CD8-positive, alpha-beta memory T cell (primary cell): ENCODE measurements at regions of chr14 and their contacts with region 1.

Region 1: DNA sequence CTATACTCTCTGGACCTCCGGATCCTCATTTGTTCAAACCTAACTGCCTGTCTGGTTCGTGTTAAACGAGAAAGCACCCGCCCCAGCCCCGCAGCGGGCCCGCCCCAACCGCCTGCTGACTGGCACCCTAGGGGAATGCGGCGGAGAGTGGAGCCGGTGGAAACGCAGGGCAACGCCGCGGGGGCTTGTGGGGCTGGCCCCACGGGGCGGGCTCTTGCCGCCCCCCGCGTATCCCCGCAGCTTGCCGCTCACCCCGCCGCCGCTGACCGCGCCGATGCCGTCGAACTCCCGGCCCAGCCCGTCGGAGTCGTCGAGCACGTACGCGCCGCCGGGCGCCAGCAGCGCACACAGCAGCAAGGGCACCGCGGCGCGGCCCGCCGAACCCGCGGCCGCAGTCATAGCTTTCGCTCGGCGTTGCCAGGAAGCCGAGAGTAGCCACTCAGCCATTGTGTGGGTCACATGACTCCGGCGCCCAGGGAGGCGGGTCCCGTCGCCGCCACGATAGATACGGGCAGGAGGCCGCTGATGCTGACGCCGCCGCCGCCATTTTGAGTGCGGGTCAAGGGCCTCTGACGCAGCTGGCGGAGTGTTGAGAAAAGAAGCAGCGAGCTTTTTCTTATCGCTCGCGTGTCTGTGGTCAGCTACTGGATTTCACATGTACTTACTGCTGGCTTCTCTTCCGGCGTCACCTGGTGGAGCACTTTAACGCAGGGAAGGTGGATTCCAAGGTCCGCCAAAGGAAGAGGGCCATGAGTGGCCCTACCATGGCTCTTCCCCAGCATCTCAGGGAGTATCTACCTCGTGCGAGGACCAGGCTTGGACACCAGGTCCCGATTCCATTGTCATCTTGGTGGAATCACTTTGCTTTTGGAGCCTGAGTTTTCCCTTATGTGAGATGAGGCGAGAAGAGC is at the start of gene GALC:
- DNase-seq: peak; percentile 92 to 97 (median 96)
- H3K4me3 ChIP-seq: peak within 1 kb of the TSS; percentile 89
- H3K4me3 Mint-ChIP-seq: peak within 1 kb of the TSS; percentile 79 to 98 (median 95)
- H3K27ac ChIP-seq: peak within 1 kb of the TSS; percentile 87
- H3K27ac Mint-ChIP-seq: peak within 1 kb of the TSS; percentile 99 to 100 (median 99)
- H3K4me1 ChIP-seq: peaks cover 42% of the 10 kb centered on the region
- H3K4me1 Mint-ChIP-seq: peaks cover 71 to 89% (median 83%) of the 10 kb centered on the region in 3 donors
- H3K27me3 ChIP-seq: no peaks in the 10 kb centered on the region
- H3K27me3 Mint-ChIP-seq: no peaks in the 10 kb centered on the region
- total RNA-seq, gene GALC: 12.4 to 13.0 TPM

Region 2: GRCh38 chr14:87944987-87945604 is 47.9 kb before region 1 on chr14:
- CTCF ChIA-PET with region 1: interaction called, 25 read pairs
- POLR2A ChIA-PET with region 1: interaction called, 3 read pairs
- DNase-seq: peak in 2 of 5 donors; percentile 39 to 44
- H3K4me3 ChIP-seq: no peak overlapping the region
- H3K4me3 Mint-ChIP-seq: no peak overlapping the region
- H3K27ac ChIP-seq: no peak overlapping the region
- H3K27ac Mint-ChIP-seq: peak overlapping the region in 3 of 8 donors; percentile 8 to 82 (median 66)
- H3K4me1 ChIP-seq: peaks cover 7% of the 10 kb centered on the region
- H3K4me1 Mint-ChIP-seq: peaks cover 15 to 33% (median 26%) of the 10 kb centered on the region in 3 donors
- H3K27me3 ChIP-seq: no peaks in the 10 kb centered on the region
- H3K27me3 Mint-ChIP-seq: no peaks in the 10 kb centered on the region

Region 3: GRCh38 chr14:87952307-87953094 is 40.5 kb before region 1 on chr14:
- CTCF ChIA-PET with region 1: interaction called, 25 read pairs
- POLR2A ChIA-PET with region 1: interaction called, 22 read pairs
- DNase-seq: peak in 1 of 5 donors; percentile 41
- H3K4me3 ChIP-seq: peak overlapping the region; percentile 18
- H3K4me3 Mint-ChIP-seq: peak overlapping the region; percentile 21 to 85 (median 78)
- H3K27ac ChIP-seq: peak overlapping the region; percentile 25
- H3K27ac Mint-ChIP-seq: peak overlapping the region; percentile 67 to 99 (median 96)
- H3K4me1 ChIP-seq: peaks cover 27% of the 10 kb centered on the region
- H3K4me1 Mint-ChIP-seq: peaks cover 66 to 83% (median 69%) of the 10 kb centered on the region in 3 donors
- H3K27me3 ChIP-seq: no peaks in the 10 kb centered on the region
- H3K27me3 Mint-ChIP-seq: no peaks in the 10 kb centered on the region

Region 4: GRCh38 chr14:87971010-87971409 is 22.0 kb before region 1 on chr14:
- CTCF ChIA-PET with region 1: no interaction called
- POLR2A ChIA-PET with region 1: no interaction called
- DNase-seq: no peak
- H3K4me3 ChIP-seq: no peak overlapping the region
- H3K4me3 Mint-ChIP-seq: no peak overlapping the region
- H3K27ac ChIP-seq: no peak overlapping the region
- H3K27ac Mint-ChIP-seq: peak overlapping the region in 3 of 8 donors; percentile 51 to 76 (median 69)
- H3K4me1 ChIP-seq: no peaks in the 10 kb centered on the region
- H3K4me1 Mint-ChIP-seq: peaks cover 8 to 20% (median 14%) of the 10 kb centered on the region in 3 donors
- H3K27me3 ChIP-seq: no peaks in the 10 kb centered on the region
- H3K27me3 Mint-ChIP-seq: no peaks in the 10 kb centered on the region

Region 5: DNA sequence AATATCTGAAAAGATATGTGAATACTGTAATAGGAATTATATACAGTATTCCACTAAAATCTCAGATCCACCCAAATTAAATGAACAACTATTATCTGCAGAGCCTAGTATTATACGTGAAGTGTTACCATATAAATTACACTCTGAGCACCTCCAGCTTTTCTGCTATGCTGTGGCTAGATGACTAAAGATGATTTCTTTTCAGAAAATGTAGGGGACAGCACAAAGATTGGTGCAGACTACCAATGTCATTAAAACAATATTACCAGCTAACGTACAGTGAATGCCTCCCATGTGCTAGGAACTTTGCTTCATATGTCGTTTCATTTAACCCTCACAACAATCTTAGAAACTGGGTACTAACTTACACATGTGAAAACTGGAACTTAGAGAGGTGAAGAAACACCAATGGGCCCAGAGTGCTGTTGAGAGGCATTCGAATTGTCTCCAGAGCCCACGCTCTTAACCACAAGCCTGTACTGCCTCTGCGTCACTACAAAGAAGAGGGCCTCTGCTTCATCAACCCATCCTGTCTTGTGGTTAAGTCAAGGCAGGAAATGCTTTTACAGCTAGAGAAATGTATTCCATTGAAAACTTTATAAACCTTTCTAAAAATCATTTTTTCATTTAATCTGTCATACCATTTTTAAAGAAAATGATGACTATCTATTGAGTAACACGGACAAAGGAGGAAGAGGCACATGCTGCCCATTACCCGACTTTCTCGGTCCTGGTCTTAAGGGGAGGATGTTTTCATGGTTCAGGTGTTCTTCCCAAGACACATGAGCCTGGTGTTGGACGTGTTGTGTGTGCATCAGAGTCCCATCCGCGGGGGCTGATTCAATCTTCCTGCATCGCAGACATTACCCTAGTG is 13.2 kb after region 1 on chr14:
- CTCF ChIA-PET with region 1: interaction called, 16 read pairs
- POLR2A ChIA-PET with region 1: interaction called, 69 read pairs
- DNase-seq: peak; percentile 36 to 86 (median 84)
- H3K4me3 ChIP-seq: peak overlapping the region; percentile 58
- H3K4me3 Mint-ChIP-seq: peak overlapping the region; percentile 77 to 95 (median 88)
- H3K27ac ChIP-seq: peak overlapping the region; percentile 76
- H3K27ac Mint-ChIP-seq: peak overlapping the region; percentile 94 to 99 (median 98)
- H3K4me1 ChIP-seq: peaks cover 60% of the 10 kb centered on the region
- H3K4me1 Mint-ChIP-seq: peaks cover 62 to 86% (median 85%) of the 10 kb centered on the region in 3 donors
- H3K27me3 ChIP-seq: no peaks in the 10 kb centered on the region
- H3K27me3 Mint-ChIP-seq: peaks cover 0 to 1% of the 10 kb centered on the region in 2 donors

Region 6: GRCh38 chr14:88168498-88169165 is 175.7 kb after region 1 on chr14:
- CTCF ChIA-PET with region 1: interaction called, 13 read pairs
- POLR2A ChIA-PET with region 1: interaction called, 3 read pairs
- DNase-seq: peak; percentile 29 to 72 (median 46)
- H3K4me3 ChIP-seq: no peak overlapping the region
- H3K4me3 Mint-ChIP-seq: peak overlapping the region in 5 of 7 donors; percentile 41 to 74 (median 65)
- H3K27ac ChIP-seq: no peak overlapping the region
- H3K27ac Mint-ChIP-seq: peak overlapping the region in 3 of 8 donors; percentile 23 to 43 (median 37)
- H3K4me1 ChIP-seq: no peaks in the 10 kb centered on the region
- H3K4me1 Mint-ChIP-seq: peaks cover 20 to 25% (median 22%) of the 10 kb centered on the region in 3 donors
- H3K27me3 ChIP-seq: no peaks in the 10 kb centered on the region
- H3K27me3 Mint-ChIP-seq: peaks cover 8 to 27% of the 10 kb centered on the region in 2 donors